ENCODE measurements at regions of chr16 and their contacts with region 1.

Region 1: GRCh38 chr16:13779676-13780075 is 140.3 kb upstream of the ERCC4 start:
- DNase-seq: no peak
- H3K4me3 ChIP-seq: no peak overlapping the region
- H3K27ac ChIP-seq: no peak overlapping the region
- H3K4me1 ChIP-seq: no peaks in the 10 kb centered on the region
- H3K27me3 ChIP-seq: no peaks in the 10 kb centered on the region
- CTCF ChIP-seq: no peak

Region 2: GRCh38 chr16:13873835-13874438 is 94.3 kb after region 1 on chr16:
- CTCF ChIA-PET with region 1: no interaction called
- dilution Hi-C with region 1: loop called (anchors 5 kb)
- in situ Hi-C with region 1: no loop called
- intact Hi-C with region 1: no loop called
- DNase-seq: peak; percentile 7
- H3K4me3 ChIP-seq: no peak overlapping the region
- H3K27ac ChIP-seq: no peak overlapping the region
- H3K4me1 ChIP-seq: no peaks in the 10 kb centered on the region
- H3K27me3 ChIP-seq: no peaks in the 10 kb centered on the region
- CTCF ChIP-seq: peak; percentile 31 to 54

Region 3: DNA sequence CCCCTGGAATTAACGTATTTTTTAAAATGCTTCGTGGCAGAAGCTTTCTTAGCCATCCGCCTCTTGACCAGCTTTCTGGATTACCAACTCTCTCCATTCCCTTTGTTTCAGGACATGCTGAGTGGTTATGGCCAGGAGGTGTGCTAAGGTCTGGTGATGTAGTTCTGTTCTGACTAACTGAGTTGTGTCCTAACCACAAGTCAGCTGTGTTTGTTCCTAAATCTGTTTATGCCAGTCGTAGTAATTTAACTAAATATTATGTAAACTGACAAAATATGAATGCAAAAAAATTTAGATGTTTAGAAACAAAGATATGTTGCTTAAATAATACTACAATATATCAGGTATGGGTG is 353.0 kb after region 1 on chr16:
- CTCF ChIA-PET with region 1: no interaction called
- dilution Hi-C with region 1: no loop called
- in situ Hi-C with region 1: no loop called
- intact Hi-C with region 1: no loop called
- DNase-seq: no peak
- H3K4me3 ChIP-seq: no peak overlapping the region
- H3K27ac ChIP-seq: no peak overlapping the region
- H3K4me1 ChIP-seq: no peaks in the 10 kb centered on the region
- H3K27me3 ChIP-seq: no peaks in the 10 kb centered on the region
- CTCF ChIP-seq: no peak